ENCODE measurements at regions of chr15 and their contacts with region 1.

Region 1: DNA sequence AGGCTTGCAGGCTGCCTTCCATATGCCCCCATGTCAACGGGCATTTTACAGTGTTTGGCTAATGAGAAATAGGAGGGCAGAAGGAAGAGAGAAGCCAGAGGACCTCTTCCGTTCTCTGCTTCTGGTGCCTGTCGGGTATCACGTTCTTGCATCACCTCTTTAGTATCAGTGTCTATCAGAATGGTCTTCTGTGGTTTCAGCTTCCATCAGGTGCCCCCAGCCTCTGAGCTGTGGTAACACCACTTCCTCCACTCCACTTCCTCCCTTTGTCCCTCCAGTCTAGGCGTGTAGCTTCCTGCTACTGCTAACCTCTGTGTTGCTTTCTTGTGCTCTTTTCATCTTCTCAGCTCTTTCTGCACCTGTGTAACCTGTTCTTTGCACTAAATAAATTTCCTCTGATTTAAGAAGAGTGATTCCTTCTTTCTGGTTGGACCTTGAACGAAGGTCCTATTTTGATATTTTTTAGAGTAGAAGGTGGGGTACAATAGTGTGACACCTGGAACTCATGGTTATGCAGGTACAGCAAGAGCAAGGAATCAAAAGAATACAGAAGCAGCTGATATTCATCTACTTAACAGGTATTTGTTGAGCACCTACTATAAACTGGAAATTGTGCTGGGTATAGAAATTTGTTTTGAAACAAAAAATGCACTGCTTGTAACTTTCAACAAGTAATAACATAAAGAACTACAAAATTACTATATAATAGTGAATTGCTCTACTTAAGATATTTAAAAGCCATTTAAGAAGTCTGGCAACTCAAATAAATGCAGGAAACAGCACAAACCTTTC is 27.4 kb upstream of the FOXB1 start:
- DNase-seq: peak in 13 of 14 experiments; percentile 26 to 88 (median 43)
- ATAC-seq: peak; percentile 95
- H3K4me3 ChIP-seq: no peak overlapping the region
- H3K4me3 Mint-ChIP-seq: peak overlapping the region; percentile 47
- H3K27ac ChIP-seq: no peak overlapping the region
- H3K27ac Mint-ChIP-seq: peak overlapping the region; percentile 7
- H3K4me1 ChIP-seq: peaks cover 15% of the 10 kb centered on the region
- H3K4me1 Mint-ChIP-seq: peaks cover 43% of the 10 kb centered on the region
- H3K27me3 ChIP-seq: no peaks in the 10 kb centered on the region
- H3K27me3 Mint-ChIP-seq: no peaks in the 10 kb centered on the region
- CTCF ChIP-seq: no peak

Region 2: GRCh38 chr15:59797756-59798604 is 178.7 kb before region 1 on chr15:
- CTCF ChIA-PET with region 1: no interaction called
- POLR2A ChIA-PET with region 1: interaction called, 13 read pairs
- intact Hi-C with region 1: loop called in 1 of 2 experiments (anchors 5 kb)
- DNase-seq: peak in 1 of 14 experiments; percentile 39
- ATAC-seq: no peak
- H3K4me3 ChIP-seq: peak overlapping the region; percentile 20
- H3K4me3 Mint-ChIP-seq: peak overlapping the region; percentile 69
- H3K27ac ChIP-seq: peak overlapping the region in 1 of 2 donors; percentile 55
- H3K27ac Mint-ChIP-seq: peak overlapping the region; percentile 81
- H3K4me1 ChIP-seq: peaks cover 54% of the 10 kb centered on the region
- H3K4me1 Mint-ChIP-seq: peaks cover 80% of the 10 kb centered on the region
- H3K27me3 ChIP-seq: no peaks in the 10 kb centered on the region
- H3K27me3 Mint-ChIP-seq: no peaks in the 10 kb centered on the region
- CTCF ChIP-seq: no peak

Region 3: GRCh38 chr15:59936741-59937140 is 39.9 kb before region 1 on chr15:
- CTCF ChIA-PET with region 1: no interaction called
- POLR2A ChIA-PET with region 1: interaction called, 3 read pairs
- intact Hi-C with region 1: loop called in 1 of 2 experiments (anchors 5 kb)
- DNase-seq: no peak
- ATAC-seq: no peak
- H3K4me3 ChIP-seq: no peak overlapping the region
- H3K4me3 Mint-ChIP-seq: no peak overlapping the region
- H3K27ac ChIP-seq: no peak overlapping the region
- H3K27ac Mint-ChIP-seq: no peak overlapping the region
- H3K4me1 ChIP-seq: no peaks in the 10 kb centered on the region
- H3K4me1 Mint-ChIP-seq: no peaks in the 10 kb centered on the region
- H3K27me3 ChIP-seq: no peaks in the 10 kb centered on the region
- H3K27me3 Mint-ChIP-seq: peaks cover 9% of the 10 kb centered on the region
- CTCF ChIP-seq: no peak